Activated CD4-positive, alpha-beta memory T cell treated with anti-CD3 and anti-CD28 coated beads for 36 hours (primary cell): ENCODE measurements at regions of chr15 and their contacts with region 1.

Region 1: DNA sequence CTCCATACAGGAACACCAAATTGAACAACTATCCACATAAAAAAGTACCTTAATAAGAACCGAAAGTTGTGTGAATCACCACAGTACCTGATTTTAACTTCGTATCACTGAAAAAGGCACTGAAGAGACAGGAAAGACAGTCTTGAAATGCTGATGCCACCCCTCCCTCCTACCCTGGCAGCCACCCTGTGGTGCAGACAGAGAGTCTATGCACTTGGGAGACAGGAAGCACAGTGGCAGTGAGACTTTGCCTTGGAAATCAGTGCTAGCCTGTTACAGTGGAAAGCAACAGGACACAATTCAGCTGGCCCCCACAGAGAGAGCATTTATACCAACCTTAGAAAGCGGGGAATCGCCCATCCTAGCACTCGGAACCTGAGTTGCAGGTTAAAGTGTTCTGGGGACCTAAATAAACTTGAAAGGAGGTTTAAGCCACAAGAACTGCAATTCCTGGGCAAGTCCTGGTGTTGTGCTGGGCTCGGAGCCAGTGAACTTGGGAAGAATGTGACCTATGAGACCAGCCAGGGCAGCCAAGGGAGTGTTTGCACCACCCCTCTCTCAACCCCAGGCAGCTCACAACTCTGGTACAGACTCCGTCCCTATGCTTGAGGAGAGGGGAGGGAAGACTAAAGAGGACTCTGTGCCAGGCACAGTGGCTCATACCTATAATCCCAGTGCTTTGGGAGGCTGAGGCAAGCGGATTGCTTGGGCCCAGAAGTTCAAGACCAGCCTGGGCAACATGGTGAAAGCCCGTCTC is 240.1 kb downstream of the ISL2 start:
- DNase-seq: peak; percentile 35
- H3K4me3 Mint-ChIP-seq: no peak overlapping the region
- H3K27ac Mint-ChIP-seq: no peak overlapping the region
- H3K4me1 Mint-ChIP-seq: peaks cover 26% of the 10 kb centered on the region
- H3K27me3 Mint-ChIP-seq: no peaks in the 10 kb centered on the region

Region 2: DNA sequence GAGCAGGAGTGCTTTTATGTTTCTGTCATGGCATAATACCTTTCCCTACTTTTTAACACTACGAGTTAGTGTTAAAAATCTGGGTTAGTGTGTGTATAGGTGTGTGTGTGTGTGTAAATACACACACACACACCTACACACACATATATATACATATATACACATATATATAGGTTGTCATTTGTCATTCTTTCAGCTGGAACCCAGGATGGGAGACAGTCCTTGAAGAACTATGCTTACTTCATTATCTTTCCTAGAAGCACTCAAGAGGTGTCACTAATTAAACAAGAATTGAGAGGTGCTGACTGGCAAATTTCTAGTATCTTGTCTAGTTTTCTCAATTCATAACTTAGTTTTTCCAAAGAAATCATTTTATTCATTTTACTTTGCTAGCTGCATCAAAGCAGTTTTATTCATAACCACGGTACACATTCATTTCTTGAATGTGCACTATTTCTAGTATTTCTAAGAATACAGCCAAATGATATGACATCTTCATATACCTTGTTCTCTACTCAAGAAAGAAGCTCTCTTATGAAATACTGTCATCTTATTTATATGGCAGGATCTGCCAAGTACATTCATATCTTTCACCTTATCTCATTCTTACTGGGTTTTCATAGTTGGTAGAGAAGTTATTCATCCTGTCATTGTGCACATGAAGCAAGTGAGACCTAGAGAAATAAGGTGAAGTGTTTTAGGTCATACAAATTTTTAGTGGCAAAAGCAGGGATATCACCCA is 193.5 kb before region 1 on chr15:
- CTCF ChIA-PET with region 1: no interaction called
- POLR2A ChIA-PET with region 1: no interaction called
- intact Hi-C with region 1: loop called (anchors 2 kb)
- DNase-seq: no peak
- H3K4me3 Mint-ChIP-seq: no peak overlapping the region
- H3K27ac Mint-ChIP-seq: no peak overlapping the region
- H3K4me1 Mint-ChIP-seq: peaks cover 8% of the 10 kb centered on the region
- H3K27me3 Mint-ChIP-seq: no peaks in the 10 kb centered on the region

Region 3: GRCh38 chr15:76566276-76566675 is 10.4 kb before region 1 on chr15:
- CTCF ChIA-PET with region 1: no interaction called
- POLR2A ChIA-PET with region 1: no interaction called
- intact Hi-C with region 1: no loop called
- DNase-seq: no peak
- H3K4me3 Mint-ChIP-seq: no peak overlapping the region
- H3K27ac Mint-ChIP-seq: no peak overlapping the region
- H3K4me1 Mint-ChIP-seq: no peaks in the 10 kb centered on the region
- H3K27me3 Mint-ChIP-seq: no peaks in the 10 kb centered on the region

Region 4: DNA sequence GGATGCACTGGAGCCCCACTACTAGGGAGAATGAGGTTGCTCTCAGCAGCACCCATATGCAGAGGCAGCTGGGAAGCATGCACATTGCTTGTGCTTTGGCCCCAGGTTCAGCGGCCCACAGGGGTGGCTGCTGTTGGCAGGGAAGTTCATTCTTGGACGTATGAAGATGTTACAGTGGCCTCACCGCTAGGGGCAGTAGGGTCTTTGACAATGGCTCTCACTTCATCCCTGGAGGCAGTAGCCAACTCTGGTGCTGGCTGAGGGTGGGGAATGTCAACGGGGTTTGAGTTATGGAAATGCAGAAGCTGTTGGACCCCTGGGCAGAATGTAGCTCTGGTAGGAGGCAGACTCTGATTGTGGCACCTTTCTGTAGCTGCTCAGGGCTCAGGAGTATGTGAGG is 48.6 kb after region 1 on chr15:
- CTCF ChIA-PET with region 1: no interaction called
- POLR2A ChIA-PET with region 1: no interaction called
- intact Hi-C with region 1: no loop called
- DNase-seq: no peak
- H3K4me3 Mint-ChIP-seq: no peak overlapping the region
- H3K27ac Mint-ChIP-seq: no peak overlapping the region
- H3K4me1 Mint-ChIP-seq: no peaks in the 10 kb centered on the region
- H3K27me3 Mint-ChIP-seq: no peaks in the 10 kb centered on the region

Region 5: DNA sequence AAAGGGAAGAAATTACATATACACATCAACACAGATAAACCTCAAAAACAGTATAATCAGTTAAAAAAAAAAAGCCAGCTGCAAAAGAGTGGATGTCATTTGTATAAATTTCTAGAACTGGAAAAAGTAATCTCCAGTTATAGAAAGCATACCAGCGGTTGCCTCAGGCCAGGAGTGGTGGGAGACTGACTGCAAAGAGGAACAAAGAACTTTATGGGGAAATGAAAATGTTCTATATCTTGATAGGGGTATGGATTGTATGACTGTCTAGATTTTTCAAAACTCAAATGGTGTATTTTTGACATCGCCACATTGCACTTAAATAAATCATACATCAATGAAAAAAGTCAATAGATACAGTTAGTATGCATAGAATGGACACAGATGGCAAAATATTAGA is 86.8 kb after region 1 on chr15:
- CTCF ChIA-PET with region 1: no interaction called
- POLR2A ChIA-PET with region 1: no interaction called
- intact Hi-C with region 1: loop called (anchors 5 kb)
- DNase-seq: no peak
- H3K4me3 Mint-ChIP-seq: no peak overlapping the region
- H3K27ac Mint-ChIP-seq: no peak overlapping the region
- H3K4me1 Mint-ChIP-seq: peaks cover 7% of the 10 kb centered on the region
- H3K27me3 Mint-ChIP-seq: no peaks in the 10 kb centered on the region

Region 6: DNA sequence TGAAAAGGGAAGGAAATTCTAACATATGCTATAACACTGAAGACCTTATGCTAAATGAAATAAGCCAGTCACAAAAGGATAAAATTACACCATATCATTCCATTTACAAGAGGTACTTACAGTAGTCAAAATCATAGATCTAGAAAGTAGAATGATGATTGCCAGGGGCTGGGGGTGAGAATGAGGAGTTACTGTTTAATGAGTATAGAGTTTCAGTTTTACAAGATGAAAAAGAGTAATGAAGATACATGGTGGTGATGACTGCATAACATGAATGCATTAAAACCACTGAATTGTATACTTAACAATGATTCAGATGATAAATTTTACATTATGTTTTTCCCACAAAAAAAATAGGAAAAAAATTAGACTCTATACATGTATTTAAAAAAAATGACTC is 175.8 kb after region 1 on chr15:
- CTCF ChIA-PET with region 1: no interaction called
- POLR2A ChIA-PET with region 1: no interaction called
- intact Hi-C with region 1: loop called (anchors 2 kb)
- DNase-seq: peak; percentile 37
- H3K4me3 Mint-ChIP-seq: no peak overlapping the region
- H3K27ac Mint-ChIP-seq: no peak overlapping the region
- H3K4me1 Mint-ChIP-seq: peaks cover 11% of the 10 kb centered on the region
- H3K27me3 Mint-ChIP-seq: no peaks in the 10 kb centered on the region